ENCODE measurements at regions of chr10 and their contacts with region 1.

Region 1: DNA sequence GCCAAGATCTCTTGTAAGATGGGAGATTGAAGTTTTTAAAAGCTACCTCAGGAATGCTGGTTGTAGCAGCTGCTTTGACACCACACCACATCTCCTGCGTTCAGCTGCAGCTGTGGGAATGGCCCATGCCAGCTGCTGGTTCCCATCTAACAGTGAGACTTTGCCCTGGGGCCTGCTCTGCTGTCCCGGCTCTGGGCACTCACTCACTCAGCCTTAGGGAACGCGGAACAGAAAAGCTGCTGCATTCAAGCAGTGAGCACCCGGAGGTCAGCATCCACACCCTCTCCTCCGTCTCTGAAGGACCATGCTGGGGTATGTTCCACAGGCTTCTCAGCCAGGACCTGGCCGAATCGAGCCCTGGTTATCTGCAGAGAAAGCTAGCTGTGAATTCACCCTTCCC is 197.1 kb upstream of the CXCL12 start:
- DNase-seq: no peak
- H3K4me3 ChIP-seq: no peak overlapping the region
- H3K4me3 Mint-ChIP-seq: no peak overlapping the region
- H3K27ac ChIP-seq: no peak overlapping the region
- H3K27ac Mint-ChIP-seq: no peak overlapping the region
- H3K4me1 ChIP-seq: no peaks in the 10 kb centered on the region
- H3K4me1 Mint-ChIP-seq: no peaks in the 10 kb centered on the region
- H3K27me3 ChIP-seq: no peaks in the 10 kb centered on the region
- H3K27me3 Mint-ChIP-seq: peaks cover 0 to 2% (median 0%) of the 10 kb centered on the region in 3 donors
- CTCF ChIP-seq: no peak

Region 2: DNA sequence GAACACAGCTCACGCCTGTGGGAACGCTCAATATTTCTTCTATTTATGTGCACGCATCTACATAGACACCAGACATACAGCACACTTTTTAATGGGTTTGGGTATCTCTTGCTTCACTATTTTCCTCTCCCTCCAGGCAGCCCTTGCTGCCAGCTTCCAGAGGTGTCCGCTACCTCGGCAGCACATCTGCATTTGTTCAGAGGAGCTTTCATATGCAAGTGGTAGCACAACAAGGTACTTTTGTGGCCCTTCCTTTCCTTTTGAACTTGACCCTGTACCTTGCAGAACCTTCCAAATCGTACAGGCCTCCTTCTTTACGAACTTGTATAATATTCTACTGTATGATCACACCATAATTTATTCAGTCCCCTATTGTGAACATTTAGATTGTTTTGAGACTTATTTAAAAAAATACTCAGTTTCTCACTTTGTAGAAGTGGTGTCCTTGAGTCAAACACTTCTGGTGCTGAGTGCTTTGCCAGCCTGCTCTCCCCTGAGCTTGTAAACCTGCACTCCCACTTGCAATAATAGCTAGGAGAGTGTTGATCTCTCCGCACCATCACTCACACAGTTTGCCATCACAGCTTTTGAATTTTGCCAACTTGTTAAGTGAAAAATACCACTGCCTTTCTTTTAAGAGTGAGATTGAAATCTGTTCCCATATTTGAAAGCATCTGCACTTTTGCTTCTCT is 827.3 kb before region 1 on chr10:
- intact Hi-C with region 1: no loop called
- DNase-seq: no peak
- H3K4me3 ChIP-seq: no peak overlapping the region
- H3K4me3 Mint-ChIP-seq: no peak overlapping the region
- H3K27ac ChIP-seq: no peak overlapping the region
- H3K27ac Mint-ChIP-seq: no peak overlapping the region
- H3K4me1 ChIP-seq: no peaks in the 10 kb centered on the region
- H3K4me1 Mint-ChIP-seq: peaks cover 2% of the 10 kb centered on the region
- H3K27me3 ChIP-seq: no peaks in the 10 kb centered on the region
- H3K27me3 Mint-ChIP-seq: peaks cover 0 to 2% (median 0%) of the 10 kb centered on the region in 3 donors
- CTCF ChIP-seq: no peak

Region 3: GRCh38 chr10:44513591-44513990 is 68.4 kb before region 1 on chr10:
- intact Hi-C with region 1: no loop called
- DNase-seq: no peak
- H3K4me3 ChIP-seq: no peak overlapping the region
- H3K4me3 Mint-ChIP-seq: no peak overlapping the region
- H3K27ac ChIP-seq: no peak overlapping the region
- H3K27ac Mint-ChIP-seq: no peak overlapping the region
- H3K4me1 ChIP-seq: no peaks in the 10 kb centered on the region
- H3K4me1 Mint-ChIP-seq: peaks cover 5% of the 10 kb centered on the region
- H3K27me3 ChIP-seq: no peaks in the 10 kb centered on the region
- H3K27me3 Mint-ChIP-seq: peaks cover 0 to 1% (median 1%) of the 10 kb centered on the region in 3 donors
- CTCF ChIP-seq: no peak

Region 4: DNA sequence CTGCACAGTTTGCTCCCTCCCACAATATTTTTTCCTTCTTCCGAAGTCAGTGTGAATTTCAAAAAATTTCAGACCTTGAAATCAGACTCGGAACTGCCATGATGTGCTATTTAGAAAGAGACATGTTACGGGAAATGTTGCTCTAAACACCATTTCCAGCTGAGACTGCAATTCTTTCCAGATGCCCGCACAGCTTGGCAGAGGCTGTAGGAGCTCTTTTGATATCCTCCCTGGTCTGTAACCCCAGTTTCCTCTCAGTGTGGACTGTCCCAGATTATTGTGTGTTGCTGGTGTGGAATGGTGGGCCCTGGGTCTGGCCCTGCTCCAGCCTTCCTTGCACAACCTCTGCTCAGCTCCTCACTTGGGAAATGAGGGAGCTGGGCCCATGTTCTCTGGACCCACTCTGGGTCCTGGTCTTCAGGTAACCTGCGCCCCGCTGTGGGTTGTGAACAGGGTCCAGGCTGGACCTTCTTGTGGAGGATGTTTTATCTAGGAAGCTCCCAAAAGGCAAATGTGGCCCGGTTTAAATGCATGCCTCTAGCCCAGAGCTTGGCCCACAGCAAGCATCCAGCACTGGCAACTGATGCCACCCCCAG is 24.3 kb before region 1 on chr10:
- intact Hi-C with region 1: loop called in 1 of 2 experiments (anchors 2 kb)
- DNase-seq: no peak
- H3K4me3 ChIP-seq: no peak overlapping the region
- H3K4me3 Mint-ChIP-seq: no peak overlapping the region
- H3K27ac ChIP-seq: no peak overlapping the region
- H3K27ac Mint-ChIP-seq: no peak overlapping the region
- H3K4me1 ChIP-seq: no peaks in the 10 kb centered on the region
- H3K4me1 Mint-ChIP-seq: no peaks in the 10 kb centered on the region
- H3K27me3 ChIP-seq: no peaks in the 10 kb centered on the region
- H3K27me3 Mint-ChIP-seq: peaks cover 0 to 2% (median 1%) of the 10 kb centered on the region in 3 donors
- CTCF ChIP-seq: no peak

Measured in CD14-positive monocyte (primary cell).